ENCODE measurements at regions of chr22 and their contacts with region 1.

Region 1: DNA sequence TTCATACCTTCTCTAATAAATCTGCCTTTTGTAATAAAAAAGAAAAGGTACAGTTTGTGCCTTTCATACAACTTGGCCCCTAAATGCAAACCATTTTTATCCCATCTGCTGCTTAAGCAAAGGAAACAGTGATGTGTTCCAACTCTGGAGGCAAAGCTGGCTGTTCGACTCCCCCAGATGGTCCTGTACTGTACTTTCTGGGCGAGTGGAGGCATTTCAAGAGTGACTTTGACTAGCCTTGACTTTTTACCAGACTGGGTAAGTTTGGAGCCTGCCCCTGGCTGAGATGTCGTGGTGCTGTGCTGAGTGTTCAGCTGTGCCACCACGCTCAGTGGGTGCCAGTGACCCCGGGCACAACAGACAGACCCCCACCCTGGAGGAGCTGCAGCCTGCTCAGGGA is 10.2 kb downstream of the MICALL1 start:
- DNase-seq: no peak
- H3K4me3 ChIP-seq: no peak overlapping the region
- H3K27ac ChIP-seq: no peak overlapping the region
- H3K4me1 ChIP-seq: no peaks in the 10 kb centered on the region
- H3K27me3 ChIP-seq: no peaks in the 10 kb centered on the region
- CTCF ChIP-seq: no peak

Region 2: GRCh38 chr22:37862570-37863325 is 53.6 kb before region 1 on chr22:
- CTCF ChIA-PET with region 1: no interaction called
- POLR2A ChIA-PET with region 1: no interaction called
- intact Hi-C with region 1: no loop called
- DNase-seq: no peak
- H3K4me3 ChIP-seq: no peak overlapping the region
- H3K27ac ChIP-seq: no peak overlapping the region
- H3K4me1 ChIP-seq: no peaks in the 10 kb centered on the region
- H3K27me3 ChIP-seq: no peaks in the 10 kb centered on the region
- CTCF ChIP-seq: no peak

Region 3: GRCh38 chr22:37896181-37896592 is 20.1 kb before region 1 on chr22:
- CTCF ChIA-PET with region 1: no interaction called
- POLR2A ChIA-PET with region 1: interaction called, 19 read pairs
- intact Hi-C with region 1: no loop called
- DNase-seq: peak; percentile 70 to 100
- H3K4me3 ChIP-seq: peak overlapping the region; percentile 38; the same call in 1 of the 2 replicates
- H3K27ac ChIP-seq: peak overlapping the region; percentile 92
- H3K4me1 ChIP-seq: peaks cover 88% of the 10 kb centered on the region
- H3K27me3 ChIP-seq: no peaks in the 10 kb centered on the region
- CTCF ChIP-seq: no peak

Region 4: GRCh38 chr22:37933711-37934376 is 17.5 kb after region 1 on chr22:
- CTCF ChIA-PET with region 1: no interaction called
- POLR2A ChIA-PET with region 1: no interaction called
- intact Hi-C with region 1: no loop called
- DNase-seq: peak; percentile 87 to 95
- H3K4me3 ChIP-seq: no peak overlapping the region
- H3K27ac ChIP-seq: peak overlapping the region; percentile 17; the same call in 1 of the 2 replicates
- H3K4me1 ChIP-seq: peaks cover 17% of the 10 kb centered on the region
- H3K27me3 ChIP-seq: no peaks in the 10 kb centered on the region
- CTCF ChIP-seq: peak; percentile 97